Posterior vena cava (tissue), 2 donors: ENCODE measurements at regions of chr10 and their contacts with region 1.

Region 1: DNA sequence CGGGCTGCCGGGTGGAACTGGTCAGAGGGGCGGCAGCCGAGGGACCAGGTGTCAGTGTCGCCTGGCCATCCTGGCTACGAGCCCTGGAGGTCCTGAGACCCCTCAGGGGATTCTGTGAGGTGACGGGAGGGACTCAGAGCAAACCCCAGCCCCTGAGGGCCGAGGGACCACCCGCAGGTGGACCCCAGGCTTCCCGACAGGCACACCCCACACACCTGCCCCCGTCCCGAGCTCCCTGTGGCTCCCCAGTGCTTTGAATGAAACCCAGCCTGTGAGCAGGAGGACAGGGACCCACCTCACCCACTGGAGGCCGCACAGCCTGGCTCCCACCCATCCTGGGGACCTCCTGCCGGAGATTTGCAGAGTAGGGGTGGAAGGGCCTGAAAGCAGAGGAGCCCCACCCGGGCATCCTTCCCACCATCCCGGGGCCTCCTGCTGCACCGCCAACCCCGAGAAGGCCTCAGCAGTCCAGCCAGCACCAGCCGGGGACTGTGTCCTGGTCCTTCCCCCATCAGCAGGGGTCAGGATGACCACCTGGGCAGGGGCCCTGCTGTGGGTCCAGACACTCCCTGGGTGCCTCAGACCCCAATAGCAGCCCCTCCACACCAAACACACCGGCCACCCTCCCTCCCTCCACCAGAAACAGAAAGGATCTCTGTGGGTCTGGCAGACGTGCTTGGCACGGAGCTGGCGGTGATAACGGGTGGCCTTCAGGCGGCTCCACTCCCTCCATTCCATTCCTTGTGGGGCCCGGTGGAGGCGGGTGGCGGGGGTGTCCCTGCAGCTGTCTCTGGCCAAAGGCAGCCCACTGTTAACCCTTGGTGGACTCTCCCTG is 13.9 kb downstream of the VENTX start:
- DNase-seq: no peak

Region 2: DNA sequence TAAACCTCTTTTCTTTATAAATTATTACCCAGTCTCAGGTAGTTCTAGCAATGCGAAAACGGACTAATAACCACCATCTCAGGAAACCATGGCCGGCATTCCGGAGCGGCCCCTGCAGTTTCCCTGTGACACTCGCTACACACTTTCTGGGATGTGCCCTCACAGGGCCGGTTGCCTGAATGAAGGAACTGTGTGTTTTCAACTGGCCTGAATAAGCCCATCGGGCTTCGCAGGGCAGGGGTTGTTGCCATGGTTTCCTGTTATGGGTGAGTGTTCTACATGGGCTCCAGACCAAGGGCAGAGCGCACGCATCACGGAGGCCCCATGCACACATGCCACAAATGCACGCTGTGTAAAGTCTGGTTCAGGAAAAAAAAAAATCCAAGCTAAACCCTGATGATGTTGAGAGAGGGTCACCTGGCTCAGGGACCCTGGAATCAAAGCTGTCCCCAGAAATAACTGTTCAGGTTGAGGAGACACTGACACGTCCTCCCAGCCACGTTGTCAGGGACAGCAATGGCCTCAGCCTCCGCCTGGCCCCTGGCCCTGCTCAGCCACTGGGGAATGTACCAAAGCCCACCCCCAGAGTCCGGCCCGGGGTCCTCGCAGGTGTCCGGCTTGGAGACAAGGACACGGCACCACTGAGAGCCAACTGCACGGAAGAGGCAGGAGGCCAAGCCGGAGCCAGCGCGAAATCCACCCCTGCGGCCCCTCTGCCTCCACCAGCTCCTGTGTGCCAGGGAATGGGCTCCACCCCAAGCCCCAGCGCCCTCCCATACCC is 991.7 kb before region 1 on chr10:
- intact Hi-C with region 1: loop called in 1 of 2 experiments (anchors 2 kb)
- DNase-seq: no peak

Region 3: GRCh38 chr10:132865171-132865631 is 386.4 kb before region 1 on chr10:
- intact Hi-C with region 1: loop called in 1 of 2 experiments (anchors 5 kb)
- DNase-seq: peak; percentile 60

Region 4: GRCh38 chr10:133276435-133277201 is 25.0 kb after region 1 on chr10 and contains the start of gene ADAM8:
- intact Hi-C with region 1: no loop called
- DNase-seq: no peak
- total RNA-seq, gene ADAM8: 7.0 to 9.0 TPM